BJ (cell line): ENCODE measurements at regions of chr6 and their contacts with region 1.

Region 1: DNA sequence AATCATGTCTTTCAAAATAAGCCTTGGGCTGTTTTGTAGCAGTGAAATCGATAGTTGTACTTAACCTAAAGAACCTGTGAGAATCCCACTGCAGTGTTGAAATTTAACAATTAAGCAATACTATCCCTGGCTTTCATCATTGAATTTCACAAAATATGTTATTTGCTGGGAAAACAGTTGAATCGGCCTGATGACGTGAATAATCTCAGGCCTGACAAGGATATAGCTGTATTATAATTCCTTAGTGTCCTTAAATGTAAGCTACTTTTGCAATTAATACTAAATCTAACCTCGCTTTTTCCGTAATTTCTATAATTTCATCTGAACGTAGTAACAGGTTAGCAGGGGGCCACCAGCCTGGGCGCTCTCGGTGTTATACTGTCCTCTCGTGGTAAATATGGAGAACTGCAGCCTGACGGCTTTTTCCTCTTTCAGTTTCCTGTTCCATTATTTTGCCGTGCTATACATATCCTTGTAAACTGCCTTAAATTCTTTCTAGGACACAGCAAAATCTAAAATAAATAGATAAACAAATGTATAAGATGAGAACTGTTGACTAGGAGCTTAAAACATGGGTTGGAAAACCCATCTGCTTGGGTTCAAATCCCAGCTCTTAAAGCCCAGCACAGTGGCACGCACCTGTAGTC is 24.0 kb downstream of the MTFR2 start:
- DNase-seq: no peak
- H3K4me3 ChIP-seq: no peak overlapping the region
- H3K27me3 ChIP-seq: no peaks in the 10 kb centered on the region
- CTCF ChIP-seq: peak; percentile 100

Region 2: GRCh38 chr6:135535989-135536414 is 690.1 kb before region 1 on chr6:
- CTCF ChIA-PET with region 1: interaction called, 68 read pairs
- POLR2A ChIA-PET with region 1: no interaction called
- DNase-seq: peak; percentile 51
- H3K4me3 ChIP-seq: no peak overlapping the region
- H3K27me3 ChIP-seq: no peaks in the 10 kb centered on the region
- CTCF ChIP-seq: peak; percentile 58

Region 3: GRCh38 chr6:135962731-135963130 is 263.4 kb before region 1 on chr6:
- CTCF ChIA-PET with region 1: no interaction called
- POLR2A ChIA-PET with region 1: no interaction called
- DNase-seq: no peak
- H3K4me3 ChIP-seq: no peak overlapping the region
- H3K27me3 ChIP-seq: no peaks in the 10 kb centered on the region
- CTCF ChIP-seq: no peak

Region 4: GRCh38 chr6:136031982-136032381 is 194.2 kb before region 1 on chr6:
- CTCF ChIA-PET with region 1: interaction called, 12 read pairs
- POLR2A ChIA-PET with region 1: no interaction called
- DNase-seq: no peak
- H3K4me3 ChIP-seq: no peak overlapping the region
- H3K27me3 ChIP-seq: no peaks in the 10 kb centered on the region
- CTCF ChIP-seq: peak; percentile 51

Region 5: GRCh38 chr6:136244061-136244616 is 18.0 kb after region 1 on chr6:
- CTCF ChIA-PET with region 1: interaction called, 14 read pairs
- POLR2A ChIA-PET with region 1: no interaction called
- DNase-seq: peak; percentile 9
- H3K4me3 ChIP-seq: no peak overlapping the region
- H3K27me3 ChIP-seq: no peaks in the 10 kb centered on the region
- CTCF ChIP-seq: no peak